A673 (cell line): ENCODE measurements at regions of chr4 and their contacts with region 1.

Region 1: GRCh38 chr4:70734168-70734954 is 12.6 kb downstream of the RUFY3 start:
- DNase-seq: peak; percentile 27
- H3K4me3 ChIP-seq: peak overlapping the region; percentile 39
- H3K27ac ChIP-seq: peak overlapping the region; percentile 76
- H3K4me1 ChIP-seq: no peaks in the 10 kb centered on the region
- H3K27me3 ChIP-seq: no peaks in the 10 kb centered on the region
- CTCF ChIP-seq: no peak

Region 2: DNA sequence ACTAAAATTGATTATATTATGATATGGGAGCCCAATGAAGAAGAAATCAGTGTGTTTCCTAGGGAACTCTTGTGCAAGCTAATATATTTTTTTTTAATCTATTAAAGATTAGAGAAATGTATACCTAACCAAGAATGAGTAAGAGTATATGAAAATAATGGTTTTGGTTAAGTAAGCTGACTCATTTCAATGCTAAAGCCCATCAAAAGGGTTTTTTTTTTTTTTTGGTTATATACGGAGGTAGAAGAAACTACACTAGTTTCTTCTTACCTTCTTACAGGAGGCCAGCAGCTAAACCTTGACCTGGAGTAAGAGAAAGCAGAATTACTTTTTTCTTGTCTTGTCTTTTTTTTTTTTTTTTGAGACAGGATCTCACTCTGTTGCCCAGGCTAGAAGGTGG is 15.0 kb after region 1 on chr4:
- CTCF ChIA-PET with region 1: no interaction called
- POLR2A ChIA-PET with region 1: interaction called, 12 read pairs
- intact Hi-C with region 1: no loop called
- DNase-seq: no peak
- H3K4me3 ChIP-seq: no peak overlapping the region
- H3K27ac ChIP-seq: no peak overlapping the region
- H3K4me1 ChIP-seq: no peaks in the 10 kb centered on the region
- H3K27me3 ChIP-seq: no peaks in the 10 kb centered on the region
- CTCF ChIP-seq: no peak

Region 3: GRCh38 chr4:70778888-70779422 is 44.6 kb after region 1 on chr4:
- CTCF ChIA-PET with region 1: no interaction called
- POLR2A ChIA-PET with region 1: no interaction called
- intact Hi-C with region 1: no loop called
- DNase-seq: no peak
- H3K4me3 ChIP-seq: no peak overlapping the region
- H3K27ac ChIP-seq: no peak overlapping the region
- H3K4me1 ChIP-seq: no peaks in the 10 kb centered on the region
- H3K27me3 ChIP-seq: no peaks in the 10 kb centered on the region
- CTCF ChIP-seq: no peak